Posterior vena cava (tissue), 2 donors: ENCODE measurements at regions of chr15 and their contacts with region 1.

Region 1: GRCh38 chr15:54519577-54519976 is 541.3 kb downstream of the UNC13C start:
- DNase-seq: no peak

Region 2: DNA sequence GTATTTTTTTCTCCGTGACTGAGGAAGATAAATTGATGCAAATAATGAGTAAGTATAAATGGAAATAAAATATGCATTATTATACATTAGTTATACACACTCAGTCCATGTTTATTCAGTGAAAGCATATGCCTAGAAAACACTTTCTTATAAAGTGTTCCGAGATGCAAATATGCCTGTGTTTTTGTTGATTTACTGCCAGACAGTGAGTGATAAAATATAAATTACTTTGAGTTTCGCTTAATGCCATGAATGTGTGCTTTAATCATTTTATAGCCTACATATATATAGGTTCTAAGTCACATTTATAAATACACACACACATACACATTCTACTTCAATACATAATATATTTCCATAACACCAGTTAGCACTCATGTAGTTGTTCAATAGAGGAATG is 27.9 kb after region 1 on chr15:
- intact Hi-C with region 1: no loop called
- DNase-seq: no peak

Region 3: GRCh38 chr15:54567408-54568035 is 47.9 kb after region 1 on chr15:
- intact Hi-C with region 1: loop called in 1 of 2 experiments (anchors 2 kb)
- DNase-seq: no peak